Psoas muscle (tissue), 8 donors: ENCODE measurements at regions of chr15 and their contacts with region 1.

Region 1: DNA sequence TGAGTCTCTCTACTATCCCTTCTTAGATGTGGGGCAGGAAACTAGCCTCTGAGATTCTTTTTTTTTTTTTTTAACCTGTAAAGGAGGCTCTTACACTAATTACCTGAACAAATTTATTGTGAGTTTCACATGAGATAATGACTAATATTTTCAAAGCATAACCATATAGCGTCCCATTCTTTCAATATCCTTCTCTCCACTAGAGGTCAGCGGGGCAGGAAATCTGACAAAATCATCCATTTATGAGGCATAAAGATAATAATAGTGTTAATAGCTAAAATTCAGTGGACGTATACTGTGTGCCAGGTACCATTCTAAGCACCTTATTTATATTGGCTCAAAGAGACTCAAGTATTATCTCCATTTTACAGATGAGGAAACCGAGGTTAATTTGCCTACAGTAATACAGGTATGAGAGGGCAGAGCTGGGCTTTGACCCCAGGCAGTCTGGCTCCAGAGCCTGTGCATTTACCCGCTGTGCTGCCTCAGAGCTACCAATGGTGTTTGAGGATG is 16.3 kb upstream of the SMAD6 start:
- DNase-seq: no peak
- ATAC-seq: no peak
- H3K4me3 ChIP-seq: no peak overlapping the region
- H3K27ac ChIP-seq: no peak overlapping the region
- H3K4me1 ChIP-seq: no peaks in the 10 kb centered on the region
- H3K27me3 ChIP-seq: no peaks in the 10 kb centered on the region
- CTCF ChIP-seq: no peak

Region 2: DNA sequence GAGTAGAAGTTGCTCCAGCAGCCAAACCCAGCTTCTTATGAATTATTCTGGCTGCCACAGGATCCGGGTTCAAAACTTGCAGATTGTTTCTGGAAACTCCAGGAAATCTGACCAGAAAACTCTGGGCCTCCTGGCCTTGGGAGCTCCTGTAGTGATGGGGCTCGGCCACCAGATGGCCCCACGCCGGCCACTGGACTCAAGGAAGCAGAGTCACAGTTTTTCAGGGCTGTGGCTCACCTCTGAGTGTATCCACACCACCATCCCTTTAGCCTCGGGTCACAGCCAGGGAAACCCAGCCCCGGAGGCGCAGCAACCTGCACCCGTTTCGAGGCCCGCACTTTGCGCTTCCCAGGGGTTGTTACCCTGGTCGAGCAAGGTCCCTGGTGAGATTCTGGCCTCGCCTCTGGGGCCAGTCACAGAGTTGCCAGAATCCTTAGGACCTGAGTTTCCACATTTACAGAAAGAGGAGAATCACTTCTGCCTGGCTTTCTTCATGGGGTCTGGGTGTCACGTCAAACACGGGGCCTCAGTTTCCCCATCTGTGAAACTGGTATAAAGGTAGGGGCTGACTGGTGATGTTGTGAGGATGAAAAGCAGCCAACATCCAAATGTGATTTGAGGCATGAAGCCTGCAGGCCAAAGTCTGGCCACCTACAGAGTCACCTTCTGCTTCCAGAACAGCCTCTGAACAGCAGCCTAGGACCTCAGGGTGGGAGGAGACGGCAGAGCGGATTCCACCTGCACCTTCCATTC is 66.4 kb before region 1 on chr15:
- intact Hi-C with region 1: loop called in 1 of 2 experiments (anchors 5 kb)
- DNase-seq: peak; percentile 76 to 85
- ATAC-seq: peak; percentile 82 to 91 (median 88)
- H3K4me3 ChIP-seq: no peak overlapping the region
- H3K27ac ChIP-seq: no peak overlapping the region
- H3K4me1 ChIP-seq: peaks cover 7% of the 10 kb centered on the region
- H3K27me3 ChIP-seq: peaks cover 0 to 20% (median 6%) of the 10 kb centered on the region in 3 donors
- CTCF ChIP-seq: peak; percentile 88

Region 3: GRCh38 chr15:66670762-66671580 is 14.7 kb before region 1 on chr15:
- intact Hi-C with region 1: loop called in 1 of 2 experiments (anchors 1 kb)
- DNase-seq: no peak
- ATAC-seq: no peak
- H3K4me3 ChIP-seq: no peak overlapping the region
- H3K27ac ChIP-seq: no peak overlapping the region
- H3K4me1 ChIP-seq: no peaks in the 10 kb centered on the region
- H3K27me3 ChIP-seq: peaks cover 0 to 3% (median 0%) of the 10 kb centered on the region in 3 donors
- CTCF ChIP-seq: no peak